ENCODE measurements at regions of chr10 and their contacts with region 1.

Region 1: GRCh38 chr10:128150045-128150493 is 23.8 kb upstream of the MKI67 start:
- H3K4me3 Mint-ChIP-seq: peak overlapping the region; percentile 80
- H3K27ac Mint-ChIP-seq: no peak overlapping the region
- H3K4me1 Mint-ChIP-seq: peaks cover 10% of the 10 kb centered on the region
- H3K27me3 Mint-ChIP-seq: peaks cover 54% of the 10 kb centered on the region

Region 2: DNA sequence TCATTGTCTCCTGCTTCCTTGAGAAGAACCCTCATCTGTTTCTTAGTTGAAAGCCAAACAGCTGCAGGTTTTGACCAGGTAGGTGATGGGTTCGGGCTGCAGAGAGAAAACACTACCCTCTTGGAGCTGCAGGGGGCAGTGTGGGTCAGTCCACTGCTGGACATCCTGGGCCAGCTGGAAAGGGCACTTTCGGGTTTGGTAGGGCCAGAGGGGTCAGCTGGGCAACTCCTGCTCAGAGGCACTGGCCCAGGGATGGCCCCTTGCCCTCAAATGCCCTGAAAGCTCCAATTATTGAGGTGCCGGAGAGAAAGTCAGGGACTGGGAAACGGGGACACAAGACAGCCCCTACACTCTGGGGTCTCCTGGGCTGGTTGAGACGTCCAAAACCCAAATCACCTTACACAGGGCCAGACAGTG is 114.5 kb before region 1 on chr10:
- intact Hi-C with region 1: loop called (anchors 2 kb)
- H3K4me3 Mint-ChIP-seq: no peak overlapping the region
- H3K27ac Mint-ChIP-seq: peak overlapping the region; percentile 65
- H3K4me1 Mint-ChIP-seq: peaks cover 35% of the 10 kb centered on the region
- H3K27me3 Mint-ChIP-seq: no peaks in the 10 kb centered on the region

Region 3: DNA sequence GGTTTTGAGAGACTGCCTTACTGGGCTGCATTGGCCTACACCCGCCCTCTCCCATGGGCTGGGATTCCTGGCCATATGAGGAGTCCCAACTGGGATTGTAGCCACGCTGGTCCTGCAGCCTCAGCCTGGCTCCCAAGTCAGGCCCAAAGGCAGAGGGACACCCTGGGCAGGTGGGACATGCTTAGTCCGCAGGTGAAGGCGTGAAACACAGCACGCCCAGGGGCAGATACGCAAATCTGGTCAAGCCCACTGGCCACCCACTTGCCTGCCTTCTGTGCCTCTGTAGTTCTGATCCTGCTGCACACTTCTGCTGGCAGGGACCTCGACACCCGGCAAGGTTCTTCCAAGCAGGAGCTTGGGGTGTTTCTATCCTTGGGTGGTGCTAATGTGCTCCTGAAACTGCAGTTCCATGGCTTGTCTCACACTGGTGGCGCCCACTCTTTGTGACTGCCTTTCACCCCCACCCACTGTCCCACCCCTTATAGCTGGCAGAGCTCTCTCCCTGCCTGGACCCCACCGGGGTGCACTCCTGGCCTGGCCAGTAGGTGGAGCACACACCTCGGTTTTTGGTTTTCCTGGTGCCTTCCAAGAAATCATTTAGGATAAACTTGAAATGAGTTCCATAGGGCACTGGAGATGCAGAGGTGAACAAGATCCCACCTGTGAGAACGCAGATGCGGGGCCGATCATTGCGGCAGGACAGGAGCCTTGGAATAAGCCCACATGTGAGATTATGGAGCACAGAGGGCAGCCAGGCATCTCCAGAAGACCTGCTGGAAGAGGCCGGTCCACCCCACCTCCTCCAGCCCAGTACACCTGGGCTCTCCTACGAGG is 71.7 kb before region 1 on chr10:
- intact Hi-C with region 1: loop called (anchors 2 kb)
- H3K4me3 Mint-ChIP-seq: no peak overlapping the region
- H3K27ac Mint-ChIP-seq: peak overlapping the region; percentile 13
- H3K4me1 Mint-ChIP-seq: peaks cover 38% of the 10 kb centered on the region
- H3K27me3 Mint-ChIP-seq: no peaks in the 10 kb centered on the region

Region 4: DNA sequence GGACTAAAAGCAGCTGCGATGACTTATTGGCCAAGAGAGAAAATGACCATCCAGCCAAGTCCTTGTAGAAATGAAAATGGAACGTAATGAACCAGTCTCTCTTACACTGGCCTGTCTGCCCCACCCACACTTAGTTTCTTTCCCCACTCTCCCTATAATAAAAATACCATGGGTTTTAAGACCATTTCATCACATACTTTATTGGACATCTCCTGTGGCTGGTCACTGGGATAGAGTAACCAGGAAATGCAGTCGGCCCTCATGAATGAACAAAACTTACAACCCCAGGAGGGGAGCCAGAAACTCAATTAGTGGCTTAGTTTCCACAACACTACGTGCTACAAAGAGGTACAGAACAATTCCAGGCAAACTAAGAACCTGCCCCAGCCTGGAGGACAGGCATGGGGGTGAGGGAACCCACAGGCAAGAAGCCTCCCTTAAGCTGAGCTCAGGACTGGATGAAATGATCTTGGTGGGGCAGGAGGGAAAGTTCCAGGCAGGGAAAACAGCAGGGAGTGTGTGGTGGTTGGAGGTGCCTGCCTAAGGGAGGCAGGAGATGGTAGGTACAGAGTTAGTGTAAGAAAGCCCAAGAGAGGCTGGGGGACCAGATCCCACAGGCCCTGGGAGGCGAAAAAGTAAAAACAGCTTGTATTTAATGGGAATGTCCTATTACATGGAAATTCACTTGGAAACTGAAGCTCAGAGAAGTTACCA is 53.4 kb before region 1 on chr10:
- intact Hi-C with region 1: no loop called
- H3K4me3 Mint-ChIP-seq: no peak overlapping the region
- H3K27ac Mint-ChIP-seq: no peak overlapping the region
- H3K4me1 Mint-ChIP-seq: peaks cover 32% of the 10 kb centered on the region
- H3K27me3 Mint-ChIP-seq: peaks cover 3% of the 10 kb centered on the region

Measured in dendritic cell treated with granulocyte-macrophage colony-stimulating factor and Interleukin-4, amounts not matched to agents 40 ng/mL and 50 ng/mL, for 4 days (primary cell).